ENCODE measurements at regions of chr10 and their contacts with region 1.

Region 1: GRCh38 chr10:73886085-73886529 is 11.8 kb upstream of the CAMK2G start:
- DNase-seq: peak; percentile 83
- CTCF ChIP-seq: peak; percentile 83

Region 2: DNA sequence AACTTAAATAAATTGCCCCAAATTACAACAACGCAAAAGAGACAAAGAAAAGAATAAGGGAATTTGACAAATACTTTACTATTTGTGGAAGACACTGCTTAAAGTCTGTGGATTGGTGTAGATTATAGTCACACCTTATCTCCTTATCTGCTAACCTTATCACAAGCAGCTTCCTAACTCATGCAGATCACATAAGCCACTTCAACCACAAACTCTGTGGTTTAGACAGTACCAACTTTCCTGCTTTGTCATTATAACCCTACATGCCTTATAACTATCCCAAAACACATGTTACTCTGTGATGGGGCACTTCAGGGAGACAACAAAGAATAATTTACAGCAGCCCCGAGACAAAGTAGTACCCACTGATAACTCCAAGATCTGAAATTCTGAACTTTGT is 348.8 kb before region 1 on chr10:
- CTCF ChIA-PET with region 1: no interaction called
- POLR2A ChIA-PET with region 1: no interaction called
- DNase-seq: no peak
- CTCF ChIP-seq: no peak

Region 3: DNA sequence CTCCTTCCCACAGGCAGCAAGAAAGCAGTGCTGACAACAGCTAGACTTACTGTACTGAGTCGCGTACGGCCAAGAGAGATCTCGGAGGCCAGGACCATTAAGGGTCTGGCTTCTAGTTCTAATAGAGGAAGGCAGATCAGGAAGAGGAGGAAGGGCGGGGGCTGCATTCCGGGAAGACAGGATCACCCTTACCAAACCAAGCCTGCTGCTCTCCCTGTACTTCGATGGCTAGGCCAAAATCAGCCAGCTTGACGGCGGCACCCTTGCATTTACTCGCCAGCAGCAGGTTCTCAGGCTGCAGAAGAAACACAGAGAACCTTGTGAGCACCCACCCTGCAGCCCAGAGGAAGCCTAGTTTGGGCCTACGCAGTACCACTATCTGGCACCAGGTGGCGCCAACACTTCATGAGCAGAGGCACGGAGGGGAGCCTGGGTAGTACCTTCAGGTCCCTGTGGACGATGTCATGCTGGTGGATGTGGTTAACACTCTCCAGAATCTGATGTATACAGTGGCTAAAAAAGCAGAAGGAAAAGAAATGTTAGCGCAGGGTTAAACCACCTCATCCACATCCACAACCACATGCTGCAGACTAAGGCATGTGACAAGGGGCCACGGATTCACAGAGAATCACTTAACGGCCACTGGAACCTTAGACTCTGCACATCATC is 37.2 kb before region 1 on chr10:
- CTCF ChIA-PET with region 1: interaction called, 383 read pairs
- POLR2A ChIA-PET with region 1: no interaction called
- DNase-seq: peak; percentile 93
- CTCF ChIP-seq: peak; percentile 99

Region 4: GRCh38 chr10:73908853-73909538 is 22.9 kb after region 1 on chr10:
- CTCF ChIA-PET with region 1: interaction called, 31 read pairs
- POLR2A ChIA-PET with region 1: no interaction called
- DNase-seq: peak; percentile 69
- CTCF ChIP-seq: no peak

Region 5: GRCh38 chr10:74026428-74027015 is 140.4 kb after region 1 on chr10:
- CTCF ChIA-PET with region 1: no interaction called
- POLR2A ChIA-PET with region 1: no interaction called
- DNase-seq: no peak
- CTCF ChIP-seq: no peak

Region 6: GRCh38 chr10:74075906-74076305 is 189.8 kb after region 1 on chr10:
- CTCF ChIA-PET with region 1: interaction called, 63 read pairs
- POLR2A ChIA-PET with region 1: no interaction called
- DNase-seq: no peak
- CTCF ChIP-seq: no peak

Region 7: GRCh38 chr10:74103560-74104248 is 217.6 kb after region 1 on chr10:
- CTCF ChIA-PET with region 1: interaction called, 65 read pairs
- POLR2A ChIA-PET with region 1: no interaction called
- DNase-seq: peak; percentile 63
- CTCF ChIP-seq: peak; percentile 59

Measured in GM10248 (cell line).